Sciatic nerve (tissue), 2 donors: ENCODE measurements at regions of chr4 and their contacts with region 1.

Region 1: DNA sequence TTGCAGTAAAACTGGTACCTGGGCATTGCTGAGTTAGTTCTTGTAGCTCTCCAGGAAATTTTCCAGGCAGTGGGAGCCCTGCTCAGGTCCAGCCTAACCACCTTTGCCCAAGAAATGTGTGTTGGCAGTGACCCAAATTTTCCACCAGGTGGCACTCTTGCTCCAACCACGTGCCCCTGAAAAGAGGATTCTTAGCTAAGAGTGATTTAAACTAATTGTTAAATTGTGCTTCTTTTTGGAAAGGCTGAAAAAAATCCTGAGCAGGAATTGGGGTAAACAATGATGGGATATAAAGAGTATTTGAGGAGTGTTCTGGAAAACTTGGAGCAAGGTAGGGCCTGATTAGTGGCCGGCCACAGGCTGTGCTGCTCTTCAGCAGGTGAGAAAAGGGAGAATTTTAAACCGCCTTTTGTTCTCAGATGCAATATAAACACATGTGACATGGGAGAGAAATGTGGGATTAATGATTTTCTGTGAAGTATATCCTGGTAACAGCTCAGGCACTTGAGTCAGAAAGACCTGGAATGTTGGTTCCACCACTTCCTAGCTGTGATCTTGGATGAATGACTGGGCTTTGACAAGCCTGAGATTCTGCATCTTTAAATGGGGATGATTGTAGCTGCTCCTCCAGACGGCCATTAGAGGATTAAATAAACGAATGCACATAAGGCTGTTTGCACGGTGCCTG is 219.6 kb downstream of the PTTG2 start:
- DNase-seq: peak; percentile 87
- ATAC-seq: peak; percentile 77

Region 2: DNA sequence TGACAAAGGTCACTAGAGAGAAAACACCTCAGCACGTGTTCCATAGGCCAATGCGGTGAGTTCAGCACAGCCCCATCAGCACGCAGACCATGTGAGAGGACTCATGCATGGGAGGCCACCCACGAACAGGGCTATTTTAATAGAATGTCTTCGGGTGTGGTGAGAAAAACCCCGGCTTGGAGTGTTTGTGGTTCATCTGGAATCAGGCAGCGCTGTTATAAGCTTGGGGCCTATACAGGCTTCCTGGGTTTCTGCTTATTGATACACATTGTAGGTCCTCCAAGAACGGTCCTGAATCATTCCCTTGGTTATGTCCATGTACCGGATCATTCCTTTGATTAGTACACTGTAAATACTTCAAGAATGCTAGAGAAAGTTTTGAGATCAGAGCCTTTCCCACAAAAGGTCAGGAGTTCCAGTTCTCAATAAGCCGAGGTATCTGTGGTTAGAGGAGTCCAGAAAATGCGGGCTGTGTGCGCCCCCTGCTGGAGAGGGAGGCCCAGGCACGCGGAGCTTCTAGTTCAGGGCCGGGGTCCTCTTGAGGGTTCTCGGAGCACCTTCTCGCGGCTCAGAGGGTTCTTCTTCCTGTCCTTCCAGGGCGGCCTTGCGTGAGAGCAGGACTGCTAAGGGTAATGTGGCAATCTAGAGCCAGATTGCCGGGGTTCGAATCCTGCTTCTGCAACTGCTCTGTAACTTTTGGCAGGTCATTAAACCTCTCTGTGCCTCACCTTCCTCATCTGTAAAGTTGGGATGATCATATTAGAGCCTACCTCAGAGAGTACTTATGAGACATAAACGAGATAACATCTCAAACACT is 551.2 kb after region 1 on chr4:
- intact Hi-C with region 1: loop called (anchors 5 kb)
- DNase-seq: peak; percentile 94
- ATAC-seq: peak; percentile 94

Region 3: GRCh38 chr4:40020221-40020943 is 1840.5 kb after region 1 on chr4:
- intact Hi-C with region 1: no loop called
- DNase-seq: no peak
- ATAC-seq: no peak